PC-9 (cell line): ENCODE measurements at regions of chrX and their contacts with region 1.

Region 1: GRCh38 chrX:56113785-56114436 is 118.2 kb upstream of the KLF8 start:
- DNase-seq: peak; percentile 99 to 100
- H3K4me3 ChIP-seq: peak overlapping the region; percentile 39; the same call in 1 of the 2 replicates
- H3K27ac ChIP-seq: peak overlapping the region; percentile 84
- H3K4me1 ChIP-seq: peaks cover 34% of the 10 kb centered on the region
- H3K27me3 ChIP-seq: no peaks in the 10 kb centered on the region
- CTCF ChIP-seq: no peak

Region 2: DNA sequence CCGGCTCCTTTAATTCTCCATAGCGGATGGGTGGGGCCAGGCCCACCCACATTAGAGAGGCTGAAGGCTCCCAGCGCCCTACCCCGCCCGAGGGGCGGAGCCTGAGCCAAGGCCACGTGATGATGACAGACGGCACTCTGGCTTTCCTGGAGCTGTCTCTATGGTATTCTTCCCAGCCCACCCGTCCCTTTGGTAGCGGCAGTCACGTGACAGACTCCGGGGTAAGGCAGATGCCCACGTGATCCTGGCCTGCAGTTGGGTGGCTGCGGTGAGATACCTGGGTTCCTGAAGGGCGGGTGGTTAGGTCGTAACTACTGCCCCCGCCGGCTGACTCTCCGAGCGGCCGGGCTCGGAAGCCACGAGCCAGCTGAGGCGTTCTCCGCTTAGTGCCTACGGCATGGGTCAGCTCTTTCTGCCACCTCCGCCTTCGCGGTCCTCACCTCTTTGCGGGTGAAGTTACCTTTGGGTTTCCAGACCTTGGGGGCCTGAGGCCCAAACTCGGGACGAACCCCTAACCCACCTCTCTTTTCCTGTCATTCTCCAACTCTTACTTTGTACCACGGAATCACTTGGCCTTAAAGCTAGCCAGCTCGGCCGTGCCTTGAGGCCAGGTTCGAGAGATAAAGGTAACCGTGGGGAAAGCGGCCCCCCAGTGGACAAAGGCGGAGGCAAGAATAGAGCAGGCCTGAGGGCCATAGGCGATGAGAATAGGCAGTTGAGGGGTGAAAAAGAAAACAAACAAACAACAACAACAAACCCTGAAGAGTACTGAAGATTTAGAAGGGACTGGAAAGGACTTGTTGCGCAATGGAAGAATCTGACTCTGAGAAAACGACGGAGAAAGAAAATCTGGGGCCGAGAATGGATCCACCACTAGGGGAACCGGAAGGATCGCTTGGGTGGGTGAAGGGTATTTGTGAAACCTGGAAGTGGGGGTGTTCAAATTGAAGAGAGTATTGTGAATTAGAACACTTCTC is 396.1 kb before region 1 on chrX and contains the start of gene RRAGB:
- CTCF ChIA-PET with region 1: no interaction called
- POLR2A ChIA-PET with region 1: no interaction called
- intact Hi-C with region 1: loop called (anchors 1 kb)
- DNase-seq: peak; percentile 89 to 96
- H3K4me3 ChIP-seq: peak within 1 kb of the TSS; percentile 91
- H3K27ac ChIP-seq: peak within 1 kb of the TSS; percentile 86
- H3K4me1 ChIP-seq: peaks cover 11% of the 10 kb centered on the region; the same call in 1 of the 2 replicates
- H3K27me3 ChIP-seq: no peaks in the 10 kb centered on the region
- CTCF ChIP-seq: peak; percentile 69
- total RNA-seq, gene RRAGB: 18.6 and 23.3 TPM in 2 replicates

Region 3: GRCh38 chrX:56033495-56034180 is 80.3 kb before region 1 on chrX:
- CTCF ChIA-PET with region 1: interaction called, 3 read pairs
- POLR2A ChIA-PET with region 1: no interaction called
- intact Hi-C with region 1: loop called (anchors 1 kb)
- DNase-seq: peak in 1 of 2 experiments; percentile 81
- H3K4me3 ChIP-seq: no peak overlapping the region; the same call in 1 of the 2 replicates
- H3K27ac ChIP-seq: peak overlapping the region; percentile 40
- H3K4me1 ChIP-seq: peaks cover 47% of the 10 kb centered on the region
- H3K27me3 ChIP-seq: no peaks in the 10 kb centered on the region
- CTCF ChIP-seq: no peak

Region 4: DNA sequence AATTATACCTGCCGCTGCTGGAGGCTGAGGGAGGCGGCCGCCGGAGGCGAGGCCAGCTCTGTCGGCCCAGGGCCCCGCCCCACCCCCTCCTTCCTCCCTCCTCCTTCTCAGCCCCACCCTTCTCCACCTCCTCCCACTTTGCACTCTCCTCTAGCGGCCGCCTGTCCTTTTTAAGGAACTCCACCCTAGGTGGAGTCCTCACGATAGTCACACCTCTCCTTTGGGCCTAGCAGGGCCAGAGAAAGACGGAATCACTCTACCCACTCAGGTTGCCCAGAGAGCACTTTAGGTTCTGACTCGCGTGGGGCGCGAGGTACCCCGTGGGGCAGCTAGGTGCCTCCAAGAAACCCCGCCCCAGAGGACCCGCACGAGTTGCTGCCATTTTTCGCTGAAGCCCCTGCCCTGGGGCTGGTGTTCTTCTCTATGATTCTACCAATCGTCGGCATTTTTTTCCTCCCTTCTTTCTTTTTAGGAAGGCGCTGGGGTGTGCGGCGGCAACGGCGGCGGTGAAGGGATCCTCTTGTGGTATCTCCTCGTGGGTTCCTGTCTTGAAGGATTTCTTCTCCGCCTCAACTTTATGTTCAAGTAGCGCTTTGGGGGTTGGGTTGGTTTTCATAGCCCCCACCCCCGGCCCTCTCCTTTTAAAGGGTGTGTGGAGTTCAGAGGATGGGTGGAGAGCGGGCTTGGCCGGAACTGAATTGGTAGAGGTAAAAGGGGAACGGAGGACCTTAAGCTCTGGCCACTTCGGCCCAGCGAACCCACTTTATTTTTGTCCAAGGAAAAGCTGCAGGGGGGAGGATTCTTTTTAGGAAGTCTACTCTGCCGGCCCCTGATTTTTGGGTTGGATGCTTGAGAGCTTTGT is 118.5 kb after region 1 on chrX and contains the start of gene KLF8:
- CTCF ChIA-PET with region 1: interaction called, 3 read pairs
- POLR2A ChIA-PET with region 1: interaction called, 6 read pairs
- intact Hi-C with region 1: loop called (anchors 1 kb)
- DNase-seq: peak; percentile 62 to 84
- H3K4me3 ChIP-seq: peak within 1 kb of the TSS; percentile 83
- H3K27ac ChIP-seq: peak within 1 kb of the TSS; percentile 53; the same call in 1 of the 2 replicates
- H3K4me1 ChIP-seq: peaks cover 37% of the 10 kb centered on the region
- H3K27me3 ChIP-seq: no peaks in the 10 kb centered on the region
- CTCF ChIP-seq: no peak
- total RNA-seq, gene KLF8: 92.7 and 93.2 TPM in 2 replicates

Region 5: GRCh38 chrX:56563231-56564161 is 449.6 kb after region 1 on chrX and contains the start of gene UBQLN2:
- CTCF ChIA-PET with region 1: interaction called, 7 read pairs
- POLR2A ChIA-PET with region 1: no interaction called
- intact Hi-C with region 1: loop called (anchors 5 kb)
- DNase-seq: peak; percentile 49 to 87
- H3K4me3 ChIP-seq: peak within 1 kb of the TSS; percentile 95
- H3K27ac ChIP-seq: peak within 1 kb of the TSS; percentile 93
- H3K4me1 ChIP-seq: peaks cover 9% of the 10 kb centered on the region; the same call in 1 of the 2 replicates
- H3K27me3 ChIP-seq: no peaks in the 10 kb centered on the region
- CTCF ChIP-seq: peak; percentile 29; the same call in 1 of the 2 replicates
- total RNA-seq, gene UBQLN2: 53.5 and 78.7 TPM in 2 replicates

Region 6: DNA sequence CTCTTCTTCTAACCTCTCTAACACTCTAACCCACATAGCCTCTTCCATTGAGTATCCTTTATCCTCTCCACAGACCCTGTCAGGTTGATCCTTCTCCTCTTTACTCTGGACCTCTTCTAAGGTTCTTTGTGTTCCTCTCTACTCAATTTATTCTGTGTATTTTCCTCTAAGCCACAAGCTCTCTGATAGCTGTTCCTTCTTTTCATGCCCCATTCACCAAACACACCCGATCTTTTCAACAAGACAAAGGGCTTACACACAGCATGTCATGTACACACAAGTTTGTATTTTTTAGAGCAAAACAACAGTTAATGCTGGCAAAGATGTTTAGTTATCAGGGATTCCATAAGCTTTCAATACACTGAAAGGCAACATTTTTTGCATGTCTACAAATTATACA is 1005.5 kb after region 1 on chrX:
- CTCF ChIA-PET with region 1: no interaction called
- POLR2A ChIA-PET with region 1: no interaction called
- intact Hi-C with region 1: loop called (anchors 10 kb)
- DNase-seq: no peak
- H3K4me3 ChIP-seq: no peak overlapping the region
- H3K27ac ChIP-seq: no peak overlapping the region
- H3K4me1 ChIP-seq: no peaks in the 10 kb centered on the region
- H3K27me3 ChIP-seq: no peaks in the 10 kb centered on the region
- CTCF ChIP-seq: no peak